H1 (cell line): ENCODE measurements at regions of chr1 and their contacts with region 1.

Region 1: DNA sequence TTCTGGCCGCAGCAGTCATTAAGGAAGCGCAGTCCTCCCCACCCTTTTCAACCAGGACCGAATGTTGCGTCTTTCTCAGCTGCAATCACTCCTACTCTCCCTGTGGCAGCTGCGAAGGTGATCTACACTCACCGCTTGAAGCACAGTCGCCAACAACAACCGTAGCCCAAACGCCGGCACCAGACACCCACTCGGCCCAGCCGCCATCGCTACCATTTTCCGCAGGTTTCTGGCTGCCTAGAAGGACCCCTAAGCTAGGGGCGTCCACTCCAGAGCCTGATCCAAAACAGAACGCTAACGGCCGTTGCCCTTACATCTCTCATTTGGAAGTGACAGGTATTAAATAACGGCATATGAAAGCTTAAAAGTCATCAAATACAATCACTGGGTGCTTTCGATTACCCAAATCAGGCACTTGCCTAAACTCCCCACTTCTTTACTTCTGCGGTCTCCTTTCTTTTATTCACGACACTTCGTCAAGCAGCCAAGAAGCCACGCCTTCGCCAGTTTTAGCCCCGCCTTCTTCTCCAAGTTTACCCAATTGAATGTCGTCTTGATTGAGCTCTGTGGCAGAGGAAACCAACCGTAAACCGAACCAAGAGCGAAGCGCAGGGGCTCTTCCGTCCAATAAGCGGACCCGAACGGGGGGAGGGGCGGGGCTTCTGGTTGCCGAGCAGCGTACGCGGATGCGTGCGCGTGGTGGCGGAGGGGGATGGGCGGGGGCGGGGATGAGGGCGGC is at the start of gene SELENOF:
- DNase-seq: peak; percentile 95 to 100
- H3K4me3 ChIP-seq: peak within 1 kb of the TSS; percentile 98 to 99 (median 99)
- H3K27ac ChIP-seq: peak within 1 kb of the TSS; percentile 96
- H3K4me1 ChIP-seq: peaks cover 0 to 3% (median 2%) of the 10 kb centered on the region in 4 experiments; a peak in 3 of 7 replicates
- H3K27me3 ChIP-seq: no peaks in the 10 kb centered on the region
- CTCF ChIP-seq: no peak
- EP300 ChIP-seq: no peak
- POLR2A ChIP-seq: peak; percentile 83 to 89
- RAD21 ChIP-seq: 0 out of 4 replicates have a peak, but pooled peaks of 1 of the 2 experiments have one; percentile 0
- total RNA-seq, gene SELENOF: 151 and 163 TPM in 2 replicates

Region 2: GRCh38 chr1:86924324-86924960 is 10.4 kb after region 1 on chr1:
- CTCF ChIA-PET with region 1: no interaction called
- POLR2A ChIA-PET with region 1: interaction called, 11 read pairs
- DNase-seq: no peak
- H3K4me3 ChIP-seq: no peak overlapping the region
- H3K27ac ChIP-seq: no peak overlapping the region
- H3K4me1 ChIP-seq: no peaks in the 10 kb centered on the region
- H3K27me3 ChIP-seq: no peaks in the 10 kb centered on the region
- CTCF ChIP-seq: no peak
- EP300 ChIP-seq: no peak
- POLR2A ChIP-seq: no peak
- RAD21 ChIP-seq: no peak

Region 3: GRCh38 chr1:86933562-86934377 is 19.7 kb after region 1 on chr1:
- CTCF ChIA-PET with region 1: interaction called, 4 read pairs
- POLR2A ChIA-PET with region 1: interaction called, 49 read pairs
- DNase-seq: no peak
- H3K4me3 ChIP-seq: peak overlapping the region in 2 of 4 experiments; percentile 4 to 38; a peak in 4 of 8 replicates
- H3K27ac ChIP-seq: peak overlapping the region; percentile 81
- H3K4me1 ChIP-seq: peaks cover 1 to 10% (median 7%) of the 10 kb centered on the region in 4 experiments; a peak in 4 of 7 replicates
- H3K27me3 ChIP-seq: no peaks in the 10 kb centered on the region
- CTCF ChIP-seq: no peak
- EP300 ChIP-seq: no peak
- POLR2A ChIP-seq: 0 out of 3 replicates have a peak, but pooled peaks of 1 of the 2 experiments have one; percentile 10
- RAD21 ChIP-seq: no peak